K562 (cell line): ENCODE measurements at regions of chr6 and their contacts with region 1.

Region 1: DNA sequence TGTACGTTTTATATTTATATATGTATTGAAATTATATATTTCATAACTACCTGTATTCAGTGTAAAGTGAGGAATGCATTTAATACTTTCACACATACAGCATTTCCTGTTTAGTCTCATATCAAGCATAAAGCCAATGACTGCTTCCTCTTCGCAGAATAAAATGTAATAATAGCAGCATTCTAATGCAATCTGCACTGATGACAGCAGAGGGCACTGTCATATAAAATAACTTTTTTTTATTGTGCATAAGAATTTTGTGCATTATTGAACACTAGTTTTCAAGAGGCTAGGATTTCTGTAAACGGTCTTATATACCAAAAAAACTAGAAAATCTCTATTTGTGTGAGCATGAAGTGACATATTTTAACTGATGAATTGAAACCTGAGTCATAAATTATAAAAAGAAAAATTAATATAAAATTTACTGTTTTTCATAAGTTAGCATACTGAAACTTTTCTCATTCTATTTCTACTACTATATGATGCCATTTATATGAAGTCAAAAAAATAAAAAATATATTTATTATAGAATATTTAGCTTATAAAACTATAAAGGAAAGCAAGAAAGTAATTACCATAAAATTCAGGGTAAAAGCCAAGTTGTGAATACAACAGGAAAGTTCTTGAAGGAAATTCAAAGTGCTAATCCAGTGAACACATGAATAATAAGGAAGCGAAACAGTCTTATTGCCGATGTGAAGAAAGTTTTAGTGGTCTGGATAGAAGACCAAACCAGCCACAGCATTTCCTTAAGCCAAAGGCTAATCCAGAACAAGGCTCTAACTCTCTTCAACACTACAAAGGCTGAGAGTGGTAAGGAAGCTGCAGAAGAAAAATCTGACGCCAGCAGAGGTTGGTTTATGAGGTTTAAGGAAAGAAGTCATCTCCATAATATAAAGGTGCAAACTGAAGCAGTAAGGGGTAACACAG is 36.3 kb downstream of the RNF146 start:
- DNase-seq: peak; percentile 21 to 34 (median 28)
- ATAC-seq: 0 out of 3 replicates have a peak, but pooled peaks have one; percentile 44
- H3K4me3 ChIP-seq: no peak overlapping the region
- H3K27ac ChIP-seq: no peak overlapping the region
- H3K4me1 ChIP-seq: no peaks in the 10 kb centered on the region
- H3K27me3 ChIP-seq: no peaks in the 10 kb centered on the region
- CTCF ChIP-seq: peak; percentile 47 to 71 (median 47); a peak in 4 of 6 replicates
- EP300 ChIP-seq: no peak
- POLR2A ChIP-seq: no peak
- RAD21 ChIP-seq: peak; percentile 65 to 68

Region 2: DNA sequence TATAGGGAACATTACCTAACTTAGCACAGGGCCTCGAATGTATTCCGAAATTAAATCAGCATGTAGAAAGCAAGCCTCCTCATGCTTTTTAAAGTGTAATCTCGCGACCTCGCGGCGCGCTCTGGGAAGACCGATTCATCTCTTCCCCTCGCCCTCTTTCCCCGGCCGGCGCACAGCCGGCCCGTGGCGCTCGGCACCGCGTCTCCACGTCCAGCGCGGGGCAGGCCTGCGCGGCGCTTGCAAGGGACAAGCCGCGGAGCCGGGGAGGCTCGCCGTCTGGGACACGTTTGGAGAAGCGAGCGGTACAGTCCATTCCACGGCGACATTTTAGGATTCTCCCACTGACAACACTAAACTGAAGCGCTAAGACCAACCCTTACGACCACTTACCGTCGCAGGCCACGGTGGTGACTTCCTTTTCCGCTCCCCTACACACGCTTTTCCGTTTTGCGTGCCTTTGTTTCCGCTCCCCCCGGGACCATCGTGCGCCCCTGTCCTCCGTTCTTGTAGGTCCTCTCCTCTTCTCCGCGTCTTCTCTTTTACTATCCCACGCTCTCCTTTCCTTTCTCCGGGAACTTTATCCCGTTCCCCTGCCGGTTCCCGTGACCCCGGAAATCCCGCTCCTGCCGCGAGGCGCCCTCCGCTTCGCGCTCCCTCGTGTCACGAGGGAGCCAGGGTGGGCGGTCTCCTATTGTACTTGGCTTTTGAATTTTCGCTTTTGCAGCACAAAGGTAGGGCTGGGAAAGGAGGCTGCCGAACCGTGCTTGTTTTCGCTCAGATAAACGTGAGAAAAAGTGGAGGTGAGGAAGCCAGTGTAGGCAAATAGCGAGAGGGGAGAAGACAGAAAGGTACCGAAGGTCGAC is 40.2 kb after region 1 on chr6 and contains the start of gene ECHDC1:
- CTCF ChIA-PET with region 1: no interaction called
- POLR2A ChIA-PET with region 1: no interaction called
- in situ Hi-C with region 1: no loop called
- intact Hi-C with region 1: loop called (anchors 2 kb)
- DNase-seq: peak; percentile 58 to 88 (median 68)
- ATAC-seq: peak; percentile 86
- H3K4me3 ChIP-seq: peak within 1 kb of the TSS; percentile 77
- H3K27ac ChIP-seq: peak within 1 kb of the TSS; percentile 91
- H3K4me1 ChIP-seq: peaks cover 3 to 14% of the 10 kb centered on the region in 2 experiments; a peak in 3 of 5 replicates
- H3K27me3 ChIP-seq: no peaks in the 10 kb centered on the region
- CTCF ChIP-seq: 0 out of 6 replicates have a peak, but pooled peaks of 1 of the 3 experiments have one; percentile 10
- EP300 ChIP-seq: no peak; the same call in 1 of the 2 replicates
- POLR2A ChIP-seq: peak; percentile 92
- RAD21 ChIP-seq: no peak
- polyA plus RNA-seq, gene ECHDC1: 96.5 to 103 TPM

Region 3: DNA sequence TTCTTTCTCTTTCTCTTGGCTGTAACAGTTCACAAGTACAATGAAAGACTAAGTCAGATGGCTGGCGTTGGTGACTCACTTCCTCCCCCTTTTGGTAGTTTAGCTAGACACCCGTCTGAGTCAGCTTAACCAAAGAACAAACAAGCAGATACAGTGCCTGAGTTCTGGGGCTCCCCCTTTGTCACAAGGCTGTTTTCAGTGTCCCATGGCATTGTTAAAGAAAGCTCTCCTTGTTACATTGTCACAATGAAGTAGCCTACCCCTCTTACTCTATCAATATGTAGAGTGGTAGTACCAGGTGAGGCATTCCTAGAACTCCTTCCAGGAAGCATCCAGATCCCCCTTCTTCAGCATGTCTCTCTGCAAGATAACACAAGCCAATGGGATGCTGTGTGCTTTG is 117.6 kb after region 1 on chr6:
- CTCF ChIA-PET with region 1: interaction called, 7 read pairs
- POLR2A ChIA-PET with region 1: interaction called, 3 read pairs
- in situ Hi-C with region 1: loop called (anchors 10 kb)
- intact Hi-C with region 1: loop called (anchors 1 kb)
- DNase-seq: peak; percentile 29 to 80 (median 51)
- ATAC-seq: peak; percentile 97
- H3K4me3 ChIP-seq: no peak overlapping the region
- H3K27ac ChIP-seq: no peak overlapping the region
- H3K4me1 ChIP-seq: no peaks in the 10 kb centered on the region
- H3K27me3 ChIP-seq: no peaks in the 10 kb centered on the region; a peak in 1 of 5 replicates
- CTCF ChIP-seq: peak; percentile 65 to 75 (median 67)
- EP300 ChIP-seq: no peak
- POLR2A ChIP-seq: no peak
- RAD21 ChIP-seq: peak; percentile 72 to 83

Region 4: DNA sequence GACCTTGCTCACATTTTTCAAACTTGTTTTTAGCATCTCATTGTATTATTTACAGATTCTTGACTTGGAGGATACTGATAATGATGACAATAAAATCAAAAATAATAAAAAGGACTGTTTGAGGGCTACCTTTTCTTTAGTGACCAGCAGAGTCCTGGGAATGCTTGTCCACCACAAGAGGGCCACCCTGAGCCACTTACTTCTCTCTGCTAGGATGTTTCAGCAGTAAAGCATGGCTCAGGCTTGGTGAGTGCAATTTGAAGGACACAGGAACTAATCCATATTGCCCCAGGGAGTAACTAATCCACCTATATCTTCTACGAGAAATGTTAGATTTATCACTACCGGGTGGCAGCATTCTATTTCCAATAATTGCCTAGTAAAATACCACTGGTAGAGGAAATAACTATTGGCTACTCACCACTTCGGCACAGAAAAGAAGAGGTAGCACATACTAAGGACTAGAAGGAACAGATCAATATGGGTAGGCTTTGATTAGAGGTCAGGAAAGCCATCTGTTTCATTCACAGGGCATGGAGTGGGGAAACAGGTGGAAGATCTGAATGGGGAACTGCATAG is 162.0 kb after region 1 on chr6:
- CTCF ChIA-PET with region 1: no interaction called
- POLR2A ChIA-PET with region 1: no interaction called
- in situ Hi-C with region 1: no loop called
- intact Hi-C with region 1: loop called (anchors 1 kb)
- DNase-seq: peak; percentile 39 to 64 (median 45)
- ATAC-seq: peak; percentile 98
- H3K4me3 ChIP-seq: no peak overlapping the region
- H3K27ac ChIP-seq: no peak overlapping the region
- H3K4me1 ChIP-seq: no peaks in the 10 kb centered on the region
- H3K27me3 ChIP-seq: peaks cover 0 to 2% of the 10 kb centered on the region in 2 experiments; a peak in 1 of 5 replicates
- CTCF ChIP-seq: peak; percentile 70 to 81 (median 79)
- EP300 ChIP-seq: no peak
- POLR2A ChIP-seq: no peak
- RAD21 ChIP-seq: peak; percentile 34 to 63

Region 5: DNA sequence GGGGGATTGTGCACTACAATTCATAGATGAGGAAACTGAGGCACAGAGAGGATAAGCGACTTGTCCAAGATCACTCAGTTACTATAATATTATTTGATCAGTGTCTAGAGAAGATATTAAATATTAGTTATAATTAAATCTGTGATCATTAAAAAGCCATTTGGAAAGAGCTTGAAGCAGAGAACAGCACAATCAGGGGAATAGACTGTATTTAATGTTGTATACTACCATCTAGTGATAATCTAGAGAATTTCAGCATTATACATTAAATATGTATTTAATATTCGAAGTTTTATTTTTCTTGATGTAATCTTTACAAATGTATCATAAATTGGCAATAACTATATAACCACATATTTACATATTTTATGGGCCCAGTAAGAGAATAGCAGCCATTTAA is 236.3 kb after region 1 on chr6:
- CTCF ChIA-PET with region 1: interaction called, 8 read pairs
- POLR2A ChIA-PET with region 1: no interaction called
- in situ Hi-C with region 1: no loop called
- intact Hi-C with region 1: loop called (anchors 5 kb)
- DNase-seq: peak in 1 of 4 experiments; percentile 16
- ATAC-seq: 0 out of 3 replicates have a peak, but pooled peaks have one; percentile 47
- H3K4me3 ChIP-seq: no peak overlapping the region
- H3K27ac ChIP-seq: no peak overlapping the region
- H3K4me1 ChIP-seq: no peaks in the 10 kb centered on the region
- H3K27me3 ChIP-seq: no peaks in the 10 kb centered on the region
- CTCF ChIP-seq: peak in 1 of 3 experiments; percentile 43; a peak in 2 of 6 replicates
- EP300 ChIP-seq: no peak
- POLR2A ChIP-seq: no peak
- RAD21 ChIP-seq: peak; percentile 46 to 54